Right lobe of liver (tissue), 6 donors: ENCODE measurements at regions of chr10 and their contacts with region 1.

Region 1: GRCh38 chr10:80382989-80383388 is 25.4 kb upstream of the PRXL2A start:
- DNase-seq: no peak
- ATAC-seq: peak; percentile 66 to 73 (median 70)
- H3K4me3 ChIP-seq: no peak overlapping the region
- H3K27ac ChIP-seq: peak overlapping the region in 1 of 3 donors; percentile 16
- H3K4me1 ChIP-seq: peaks cover 0 to 6% (median 0%) of the 10 kb centered on the region in 4 donors
- H3K27me3 ChIP-seq: no peaks in the 10 kb centered on the region
- CTCF ChIP-seq: peak; percentile 72 to 84 (median 79)
- POLR2A ChIP-seq: no peak

Region 2: DNA sequence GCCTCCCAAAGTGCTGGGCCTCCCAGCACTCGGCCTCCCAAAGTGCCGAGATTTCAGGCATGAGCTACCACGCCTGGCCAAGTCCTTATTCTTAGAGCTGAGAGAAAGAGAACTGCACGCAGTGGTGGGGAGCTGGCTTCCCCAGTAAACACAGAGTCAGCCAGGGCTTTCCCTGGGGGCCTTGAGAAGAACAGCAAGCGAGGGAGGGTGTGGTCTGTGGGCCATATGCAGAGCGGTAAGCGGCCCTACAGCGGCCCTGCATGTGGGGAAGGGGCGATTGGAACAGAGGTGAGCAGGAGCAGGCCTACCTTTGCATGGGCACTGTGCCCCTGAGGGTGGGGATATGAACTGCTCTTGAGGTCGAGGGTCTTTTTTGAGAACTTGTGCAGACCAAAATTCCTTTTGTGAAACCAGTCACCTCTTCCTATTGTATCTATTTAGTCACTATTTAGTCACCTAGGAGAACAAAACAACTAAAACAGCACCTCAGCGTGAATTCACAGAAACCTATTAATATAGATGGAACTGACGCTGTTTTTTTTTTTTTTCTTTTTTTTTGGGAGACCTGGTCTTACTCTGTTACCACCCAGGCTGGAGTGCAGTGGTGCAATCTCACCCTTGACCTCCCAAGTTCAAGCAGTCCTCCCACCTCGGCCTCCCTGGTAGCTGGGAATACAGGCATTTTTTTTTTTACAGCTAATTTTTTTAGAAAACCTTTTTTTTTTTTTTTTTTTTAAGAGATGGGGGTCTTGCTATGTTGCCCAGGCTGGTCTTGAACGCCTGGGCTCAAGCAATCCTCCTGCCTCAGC is 117.8 kb after region 1 on chr10:
- intact Hi-C with region 1: loop called in 1 of 2 experiments (anchors 10 kb)
- DNase-seq: no peak
- ATAC-seq: no peak
- H3K4me3 ChIP-seq: no peak overlapping the region
- H3K27ac ChIP-seq: peak overlapping the region; percentile 80 to 87 (median 84)
- H3K4me1 ChIP-seq: peaks cover 0 to 84% (median 38%) of the 10 kb centered on the region in 4 donors
- H3K27me3 ChIP-seq: no peaks in the 10 kb centered on the region
- CTCF ChIP-seq: no peak
- POLR2A ChIP-seq: no peak

Region 3: DNA sequence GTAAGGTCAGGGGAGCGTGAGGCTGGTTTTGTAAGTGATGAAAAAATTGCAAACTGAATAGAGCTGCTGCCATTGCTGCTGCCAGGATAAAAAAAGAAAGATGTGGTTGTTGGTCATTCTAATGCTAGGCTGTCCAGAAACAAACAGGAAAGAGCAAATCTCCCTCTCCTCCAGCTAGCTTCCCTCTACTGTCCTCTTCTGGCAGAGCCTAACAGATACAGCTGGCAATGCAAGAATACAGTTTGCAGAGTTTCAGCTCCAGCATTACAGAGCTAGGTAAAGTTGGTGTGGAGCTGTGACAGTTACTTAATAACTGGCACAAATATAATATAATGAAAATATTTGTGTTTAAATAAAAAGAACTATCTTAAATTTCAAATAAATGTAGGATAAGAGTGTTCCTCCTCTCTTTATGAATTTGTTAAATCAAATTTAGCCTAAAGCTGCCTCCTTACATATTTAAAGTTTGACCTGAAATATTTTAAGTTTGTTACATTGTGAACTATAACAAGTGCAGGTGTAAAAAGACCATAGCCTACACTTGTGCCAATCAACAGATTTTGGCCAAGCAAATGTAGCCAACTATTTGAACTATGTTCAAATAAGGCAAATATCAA is 562.4 kb after region 1 on chr10:
- intact Hi-C with region 1: no loop called
- DNase-seq: no peak
- ATAC-seq: peak; percentile 66 to 90 (median 83)
- H3K4me3 ChIP-seq: no peak overlapping the region
- H3K27ac ChIP-seq: no peak overlapping the region
- H3K4me1 ChIP-seq: no peaks in the 10 kb centered on the region
- H3K27me3 ChIP-seq: no peaks in the 10 kb centered on the region
- CTCF ChIP-seq: peak; percentile 47 to 62 (median 52)
- POLR2A ChIP-seq: no peak